Activated naive CD4-positive, alpha-beta T cell treated with anti-CD3 and anti-CD28 coated beads for 36 hours (primary cell): ENCODE measurements at regions of chr7 and their contacts with region 1.

Region 1: GRCh38 chr7:12067141-12067831 is 143.8 kb upstream of the TMEM106B start:
- DNase-seq: peak; percentile 71
- H3K4me3 Mint-ChIP-seq: no peak overlapping the region
- H3K27ac Mint-ChIP-seq: no peak overlapping the region
- H3K4me1 Mint-ChIP-seq: peaks cover 15% of the 10 kb centered on the region
- H3K27me3 Mint-ChIP-seq: no peaks in the 10 kb centered on the region

Region 2: DNA sequence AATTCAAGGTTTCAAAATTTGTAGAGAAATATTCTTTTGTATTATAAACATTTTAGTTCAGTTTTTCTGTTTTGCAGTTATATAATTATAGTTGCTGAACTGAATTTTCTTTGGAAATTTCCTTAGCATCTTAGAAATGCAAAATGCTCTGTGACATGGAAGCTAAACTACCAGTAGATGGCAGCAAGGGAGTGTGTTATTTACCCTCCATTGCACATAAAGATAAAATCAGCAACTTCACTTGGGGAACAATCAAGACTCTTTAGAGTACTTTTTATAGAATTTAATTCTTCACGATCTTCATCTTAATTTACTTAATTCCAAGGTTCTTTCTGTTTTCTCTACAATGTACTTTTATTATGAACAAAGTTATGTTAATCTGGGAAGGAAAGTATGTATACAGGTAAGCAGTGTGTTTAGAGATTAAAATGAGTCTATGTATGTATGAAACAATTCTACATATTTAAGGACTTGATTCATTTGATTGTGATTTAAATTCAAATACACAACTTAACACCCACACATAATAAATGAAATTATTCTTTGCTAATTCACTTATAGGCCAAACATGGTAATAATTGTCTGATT is 639.5 kb before region 1 on chr7:
- CTCF ChIA-PET with region 1: no interaction called
- intact Hi-C with region 1: loop called (anchors 2 kb)
- DNase-seq: peak; percentile 6
- H3K4me3 Mint-ChIP-seq: no peak overlapping the region
- H3K27ac Mint-ChIP-seq: no peak overlapping the region
- H3K4me1 Mint-ChIP-seq: no peaks in the 10 kb centered on the region
- H3K27me3 Mint-ChIP-seq: no peaks in the 10 kb centered on the region

Region 3: GRCh38 chr7:12257582-12257981 is 190.3 kb after region 1 on chr7:
- CTCF ChIA-PET with region 1: interaction called, 3 read pairs
- intact Hi-C with region 1: loop called (anchors 1 kb)
- DNase-seq: peak; percentile 48
- H3K4me3 Mint-ChIP-seq: no peak overlapping the region
- H3K27ac Mint-ChIP-seq: no peak overlapping the region
- H3K4me1 Mint-ChIP-seq: peaks cover 6% of the 10 kb centered on the region
- H3K27me3 Mint-ChIP-seq: no peaks in the 10 kb centered on the region

Region 4: GRCh38 chr7:12322284-12322902 is 255.1 kb after region 1 on chr7:
- CTCF ChIA-PET with region 1: interaction called, 23 read pairs
- intact Hi-C with region 1: loop called (anchors 1 kb)
- DNase-seq: peak; percentile 31
- H3K4me3 Mint-ChIP-seq: no peak overlapping the region
- H3K27ac Mint-ChIP-seq: no peak overlapping the region
- H3K4me1 Mint-ChIP-seq: peaks cover 2% of the 10 kb centered on the region
- H3K27me3 Mint-ChIP-seq: no peaks in the 10 kb centered on the region

Region 5: GRCh38 chr7:12389089-12389700 is 321.9 kb after region 1 on chr7:
- CTCF ChIA-PET with region 1: no interaction called
- intact Hi-C with region 1: loop called (anchors 1 kb)
- DNase-seq: peak; percentile 64
- H3K4me3 Mint-ChIP-seq: no peak overlapping the region
- H3K27ac Mint-ChIP-seq: no peak overlapping the region
- H3K4me1 Mint-ChIP-seq: no peaks in the 10 kb centered on the region
- H3K27me3 Mint-ChIP-seq: no peaks in the 10 kb centered on the region